ENCODE measurements at regions of chr1 and their contacts with region 1.

Region 1: DNA sequence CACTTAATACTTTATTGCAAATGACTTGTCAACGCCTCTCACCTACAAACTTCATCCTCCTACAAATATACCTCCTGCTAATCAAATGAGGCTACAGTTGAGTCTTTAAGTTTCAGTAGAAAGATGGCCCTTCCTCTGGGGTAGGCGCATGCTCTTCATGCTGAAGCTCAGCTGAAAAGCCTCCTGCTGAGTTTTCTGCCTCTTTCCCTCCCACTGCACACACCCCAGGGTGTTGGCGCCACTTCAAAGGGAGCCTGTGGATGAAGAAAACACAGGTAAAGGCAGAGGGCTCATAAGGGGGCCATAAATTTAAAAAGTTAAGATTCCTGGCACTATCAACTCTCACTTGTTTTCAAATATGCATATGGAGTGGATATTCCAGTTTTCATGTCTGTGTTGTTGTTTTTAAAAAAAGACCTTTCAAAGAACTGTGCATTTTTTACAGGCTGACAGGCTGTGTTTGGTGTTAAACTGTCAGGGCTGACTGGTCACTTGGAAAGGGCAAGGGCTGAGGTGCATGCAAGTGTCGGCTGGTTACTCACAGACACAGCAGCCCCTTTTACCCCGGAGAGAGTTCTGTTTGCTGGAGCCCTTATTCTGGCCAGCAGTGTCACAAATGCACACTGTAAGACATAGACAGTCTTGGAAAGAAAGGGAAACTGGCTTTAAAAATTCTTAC is 42.9 kb upstream of the LGALS8 start:
- DNase-seq: peak in 4 of 6 donors; percentile 10 to 48 (median 26)
- ATAC-seq: peak in 3 of 4 donors; percentile 50 to 75 (median 72)
- H3K4me3 ChIP-seq: no peak overlapping the region
- H3K27ac ChIP-seq: no peak overlapping the region
- H3K4me1 ChIP-seq: no peaks in the 10 kb centered on the region
- H3K27me3 ChIP-seq: no peaks in the 10 kb centered on the region
- CTCF ChIP-seq: no peak

Region 2: GRCh38 chr1:236113324-236114032 is 367.4 kb before region 1 on chr1:
- intact Hi-C with region 1: loop called in 2 of 3 experiments (anchors 5 kb)
- DNase-seq: no peak
- ATAC-seq: no peak
- H3K4me3 ChIP-seq: no peak overlapping the region
- H3K27ac ChIP-seq: no peak overlapping the region
- H3K4me1 ChIP-seq: no peaks in the 10 kb centered on the region
- H3K27me3 ChIP-seq: no peaks in the 10 kb centered on the region
- CTCF ChIP-seq: no peak